ENCODE measurements at regions of chrX and their contacts with region 1.

Region 1: DNA sequence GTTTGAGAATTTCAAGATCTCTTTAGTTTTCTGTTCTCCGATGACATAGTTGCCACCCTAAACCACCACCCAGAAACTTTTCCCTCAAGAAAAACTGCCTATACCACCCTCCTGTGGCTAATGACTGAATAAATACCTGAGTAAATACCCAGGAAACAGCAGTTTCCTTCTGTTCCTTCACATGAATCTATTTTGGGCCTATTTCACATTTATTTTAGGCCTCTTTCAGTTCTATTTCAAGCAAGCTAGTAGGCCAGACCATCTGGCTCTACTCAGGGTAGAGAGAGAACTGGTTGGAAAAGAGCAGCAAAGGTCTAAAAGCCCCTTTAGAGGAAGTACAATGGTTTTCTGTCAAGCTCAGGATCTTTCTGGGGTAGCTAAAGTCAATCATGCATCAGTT is 23.4 kb downstream of the ARHGEF9 start:
- DNase-seq: peak in 2 of 9 experiments; percentile 43 to 55
- ATAC-seq: peak; percentile 61
- H3K4me3 ChIP-seq: no peak overlapping the region
- H3K4me3 Mint-ChIP-seq: no peak overlapping the region
- H3K27ac ChIP-seq: no peak overlapping the region
- H3K27ac Mint-ChIP-seq: no peak overlapping the region
- H3K4me1 ChIP-seq: no peaks in the 10 kb centered on the region
- H3K4me1 Mint-ChIP-seq: peaks cover 4% of the 10 kb centered on the region
- H3K27me3 ChIP-seq: no peaks in the 10 kb centered on the region
- H3K27me3 Mint-ChIP-seq: peaks cover 2% of the 10 kb centered on the region
- CTCF ChIP-seq: peak; percentile 24

Region 2: DNA sequence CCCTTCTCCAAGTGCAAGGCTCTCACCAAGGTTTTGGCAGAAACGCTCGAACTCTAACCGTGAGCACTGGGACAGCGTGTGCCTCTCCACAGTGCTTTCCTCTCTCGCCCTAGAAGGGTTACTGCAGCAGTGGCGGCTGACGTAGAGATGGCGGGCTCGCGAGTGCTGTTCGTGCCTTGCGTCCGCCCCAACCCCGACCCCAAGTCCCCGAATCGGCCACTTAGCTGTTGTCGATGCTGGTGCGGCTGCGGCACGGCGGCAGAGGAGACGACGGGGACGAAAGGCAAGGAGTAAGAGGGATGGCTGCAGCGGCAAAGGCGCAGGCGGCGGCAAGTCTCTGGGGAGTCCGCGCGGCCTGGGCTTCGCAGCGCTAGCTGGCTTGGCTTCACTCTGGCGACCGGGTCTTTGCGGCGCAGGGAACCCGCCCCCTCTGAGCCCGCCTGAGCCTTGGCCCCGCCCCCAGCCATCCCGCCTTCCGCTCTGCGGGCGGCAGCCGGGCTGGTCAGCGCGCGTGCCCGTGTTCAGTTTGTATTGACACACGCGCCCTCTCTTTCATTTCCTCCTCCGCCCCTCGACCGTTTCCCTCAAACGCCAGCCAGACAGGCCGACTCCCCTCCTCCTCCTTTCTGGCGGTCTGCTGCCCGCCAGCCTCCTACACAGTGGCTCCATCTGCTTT is 410.6 kb before region 1 on chrX and contains the start of gene SPIN4:
- CTCF ChIA-PET with region 1: no interaction called
- POLR2A ChIA-PET with region 1: no interaction called
- intact Hi-C with region 1: loop called in 1 of 2 experiments (anchors 5 kb)
- DNase-seq: peak; percentile 7 to 79 (median 53)
- ATAC-seq: peak; percentile 80
- H3K4me3 ChIP-seq: peak within 1 kb of the TSS; percentile 66 to 71
- H3K4me3 Mint-ChIP-seq: peak within 1 kb of the TSS; percentile 91
- H3K27ac ChIP-seq: peak within 1 kb of the TSS; percentile 29 to 63
- H3K27ac Mint-ChIP-seq: peak within 1 kb of the TSS; percentile 66
- H3K4me1 ChIP-seq: peaks cover 8% of the 10 kb centered on the region
- H3K4me1 Mint-ChIP-seq: peaks cover 26% of the 10 kb centered on the region
- H3K27me3 ChIP-seq: no peaks in the 10 kb centered on the region
- H3K27me3 Mint-ChIP-seq: no peaks in the 10 kb centered on the region
- CTCF ChIP-seq: no peak
- total RNA-seq, gene SPIN4: 1.0 to 1.3 TPM

Region 3: GRCh38 chrX:63581398-63581797 is 180.2 kb before region 1 on chrX:
- CTCF ChIA-PET with region 1: no interaction called
- POLR2A ChIA-PET with region 1: no interaction called
- intact Hi-C with region 1: no loop called
- DNase-seq: no peak
- ATAC-seq: no peak
- H3K4me3 ChIP-seq: no peak overlapping the region
- H3K4me3 Mint-ChIP-seq: no peak overlapping the region
- H3K27ac ChIP-seq: no peak overlapping the region
- H3K27ac Mint-ChIP-seq: no peak overlapping the region
- H3K4me1 ChIP-seq: no peaks in the 10 kb centered on the region
- H3K4me1 Mint-ChIP-seq: peaks cover 3% of the 10 kb centered on the region
- H3K27me3 ChIP-seq: no peaks in the 10 kb centered on the region
- H3K27me3 Mint-ChIP-seq: no peaks in the 10 kb centered on the region
- CTCF ChIP-seq: no peak

Region 4: GRCh38 chrX:63702556-63702955 is 59.1 kb before region 1 on chrX:
- CTCF ChIA-PET with region 1: no interaction called
- POLR2A ChIA-PET with region 1: no interaction called
- intact Hi-C with region 1: loop called (anchors 10 kb)
- DNase-seq: no peak
- ATAC-seq: no peak
- H3K4me3 ChIP-seq: no peak overlapping the region
- H3K4me3 Mint-ChIP-seq: no peak overlapping the region
- H3K27ac ChIP-seq: no peak overlapping the region
- H3K27ac Mint-ChIP-seq: no peak overlapping the region
- H3K4me1 ChIP-seq: no peaks in the 10 kb centered on the region
- H3K4me1 Mint-ChIP-seq: peaks cover 2% of the 10 kb centered on the region
- H3K27me3 ChIP-seq: no peaks in the 10 kb centered on the region
- H3K27me3 Mint-ChIP-seq: no peaks in the 10 kb centered on the region
- CTCF ChIP-seq: no peak